ENCODE measurements at regions of chr16 and their contacts with region 1.

Region 1: DNA sequence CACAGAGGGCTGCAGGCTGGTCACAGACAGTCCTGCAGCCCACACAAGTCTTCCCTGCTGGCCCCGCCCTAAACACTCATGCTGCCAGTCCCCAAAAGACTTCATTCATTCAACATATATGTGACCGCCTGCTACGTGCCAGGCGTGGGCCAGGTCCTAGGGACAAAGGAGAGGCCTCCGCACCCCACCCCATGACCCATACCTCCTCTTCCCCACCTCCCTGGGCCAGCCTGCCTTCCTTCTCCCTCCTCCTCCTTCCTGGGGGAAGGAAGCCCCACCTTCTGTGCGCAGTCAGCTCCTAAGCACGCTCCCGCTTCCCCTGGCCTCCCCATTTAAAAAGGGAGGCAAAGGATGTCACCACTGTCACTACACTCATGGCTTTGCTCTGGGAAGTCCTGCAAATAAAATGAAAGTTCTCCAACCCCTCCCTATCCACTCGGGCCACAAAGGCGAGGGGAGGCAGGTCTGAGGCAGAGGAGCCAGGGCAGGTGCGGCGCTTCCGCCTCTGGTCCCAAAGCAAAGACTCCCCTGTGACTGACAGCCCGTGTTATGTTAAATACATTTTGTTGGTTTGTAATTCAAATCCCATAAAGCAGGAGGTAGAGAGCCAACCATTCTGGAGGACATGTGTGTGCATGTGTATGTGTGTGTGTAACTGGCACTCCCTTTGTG is 9.0 kb downstream of the DNAAF8 start:
- DNase-seq: no peak
- H3K4me3 ChIP-seq: no peak overlapping the region
- H3K27ac ChIP-seq: no peak overlapping the region
- H3K4me1 ChIP-seq: no peaks in the 10 kb centered on the region
- H3K27me3 ChIP-seq: no peaks in the 10 kb centered on the region
- CTCF ChIP-seq: no peak

Region 2: DNA sequence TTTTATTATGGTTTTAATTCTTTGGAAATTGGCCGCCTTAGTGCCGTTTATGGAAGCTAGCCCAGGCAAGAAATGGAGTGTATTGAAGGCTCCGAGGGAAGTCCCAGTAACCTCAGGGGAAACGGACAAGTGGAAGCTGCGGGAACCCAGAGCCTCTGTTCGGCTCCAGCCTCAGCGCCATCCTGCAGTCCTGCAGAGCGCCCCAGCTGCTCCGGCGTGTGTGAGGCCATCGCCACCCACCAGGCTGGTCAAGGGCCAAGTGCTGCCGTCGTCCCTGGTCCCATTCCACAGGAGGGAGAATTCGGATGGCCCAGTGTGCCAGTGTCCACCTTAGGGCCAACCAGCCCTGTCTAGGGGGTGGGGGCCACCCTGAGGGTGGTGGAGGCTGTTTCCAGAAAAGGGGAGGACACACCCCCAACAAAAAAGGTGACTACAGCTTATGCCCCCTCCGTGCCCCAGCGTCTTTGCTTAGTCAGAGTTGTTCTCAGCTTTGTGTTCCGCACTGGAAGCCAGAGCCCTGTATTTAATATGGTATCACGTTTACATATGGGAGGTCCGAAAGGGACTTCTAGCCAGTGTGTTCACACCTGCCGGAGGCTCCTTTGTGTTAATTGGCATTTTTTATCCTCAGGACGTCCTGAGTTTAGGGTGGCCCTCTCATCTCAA is 105.7 kb before region 1 on chr16:
- CTCF ChIA-PET with region 1: no interaction called
- POLR2A ChIA-PET with region 1: interaction called, 14 read pairs
- intact Hi-C with region 1: no loop called
- DNase-seq: no peak
- H3K4me3 ChIP-seq: no peak overlapping the region
- H3K27ac ChIP-seq: no peak overlapping the region
- H3K4me1 ChIP-seq: peaks cover 1% of the 10 kb centered on the region; the same call in 1 of the 2 replicates
- H3K27me3 ChIP-seq: no peaks in the 10 kb centered on the region
- CTCF ChIP-seq: no peak

Region 3: DNA sequence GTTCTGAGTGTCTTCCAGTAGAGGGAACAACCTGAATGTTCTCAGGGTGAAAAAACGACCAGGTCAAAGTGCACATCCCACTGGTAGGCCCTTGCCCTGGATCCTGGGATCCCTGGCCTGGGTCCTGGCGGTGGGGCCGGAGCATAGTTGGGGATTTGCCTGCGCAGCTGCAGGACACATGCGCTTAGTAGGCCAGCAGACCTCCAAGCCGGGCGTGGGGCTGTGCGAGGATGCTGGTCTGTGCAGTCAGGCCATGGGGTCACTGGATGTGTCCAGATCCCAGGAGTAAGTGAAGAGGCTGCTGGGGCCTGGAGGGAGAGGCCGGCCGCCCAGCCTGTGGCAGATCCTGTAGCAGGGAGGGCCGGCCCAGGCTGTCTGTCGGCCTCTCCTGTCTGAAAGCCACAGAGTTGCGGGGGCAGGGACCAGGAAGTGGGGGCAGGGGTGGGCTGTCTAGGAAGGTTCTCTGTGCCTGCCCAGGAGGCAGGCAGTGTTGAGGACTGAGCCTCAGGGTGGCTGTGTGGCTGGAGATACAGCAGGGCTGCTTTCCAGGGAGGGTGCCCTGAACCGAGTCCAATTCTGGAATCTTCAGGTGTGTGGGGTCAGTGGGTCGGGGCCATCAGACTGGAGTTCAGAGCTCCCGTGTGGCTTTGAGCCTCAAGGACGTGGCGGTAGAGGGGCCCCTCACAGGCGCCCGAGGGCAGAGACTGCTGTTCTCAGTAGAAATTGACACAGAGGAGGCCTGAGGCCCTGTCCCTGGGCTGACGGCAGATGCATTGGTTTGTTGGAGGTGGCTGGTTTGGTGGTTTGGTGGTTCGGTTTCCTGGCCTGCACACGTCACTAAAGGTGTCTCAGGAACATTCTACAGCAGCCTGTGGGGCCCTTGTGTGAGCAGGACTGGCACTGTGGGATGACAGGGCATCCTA is 67.2 kb before region 1 on chr16:
- CTCF ChIA-PET with region 1: no interaction called
- POLR2A ChIA-PET with region 1: no interaction called
- intact Hi-C with region 1: no loop called
- DNase-seq: no peak
- H3K4me3 ChIP-seq: no peak overlapping the region
- H3K27ac ChIP-seq: no peak overlapping the region
- H3K4me1 ChIP-seq: peaks cover 25% of the 10 kb centered on the region
- H3K27me3 ChIP-seq: no peaks in the 10 kb centered on the region
- CTCF ChIP-seq: no peak

Region 4: DNA sequence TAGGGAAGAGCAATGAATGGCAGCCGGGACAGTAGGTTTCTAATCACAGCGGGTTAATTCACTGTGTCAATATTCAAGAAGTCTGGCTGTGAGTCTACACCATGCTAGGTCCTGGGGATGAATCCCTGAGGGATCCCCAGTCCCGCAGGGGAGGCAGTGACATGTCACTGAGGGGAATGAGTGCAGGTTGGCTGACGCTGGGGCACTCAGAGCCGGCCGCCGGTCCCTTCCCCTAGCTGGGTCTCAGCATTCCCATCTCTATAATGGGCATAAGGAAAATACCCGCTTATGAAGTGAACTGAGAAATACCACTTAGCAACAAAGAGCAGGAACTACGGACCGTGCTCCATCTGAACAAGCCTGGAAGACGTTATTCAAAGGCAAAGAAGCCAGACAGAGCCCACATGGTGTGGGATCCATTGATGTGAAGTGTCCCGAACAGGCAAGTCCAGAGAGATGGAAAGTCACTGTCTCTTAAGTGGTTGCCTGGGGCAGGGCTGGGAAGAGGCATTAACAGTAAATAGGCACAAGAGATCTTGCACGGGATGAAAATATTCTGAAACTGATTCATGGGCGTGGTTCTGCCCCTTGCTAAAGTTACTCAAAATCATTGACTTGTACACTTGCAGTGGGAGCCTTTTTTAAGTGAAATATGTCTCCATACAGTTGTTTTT is 161.7 kb after region 1 on chr16:
- CTCF ChIA-PET with region 1: interaction called, 12 read pairs
- POLR2A ChIA-PET with region 1: no interaction called
- intact Hi-C with region 1: no loop called
- DNase-seq: no peak
- H3K4me3 ChIP-seq: no peak overlapping the region
- H3K27ac ChIP-seq: no peak overlapping the region
- H3K4me1 ChIP-seq: no peaks in the 10 kb centered on the region
- H3K27me3 ChIP-seq: no peaks in the 10 kb centered on the region
- CTCF ChIP-seq: no peak